Endothelial cell of umbilical vein (primary cell): ENCODE measurements at regions of chr4 and their contacts with region 1.

Region 1: GRCh38 chr4:167210166-167210565 is 24.1 kb downstream of the SPOCK3 start:
- DNase-seq: no peak
- H3K4me3 ChIP-seq: no peak overlapping the region
- H3K27ac ChIP-seq: no peak overlapping the region
- H3K4me1 ChIP-seq: peaks cover 2% of the 10 kb centered on the region
- H3K27me3 ChIP-seq: no peaks in the 10 kb centered on the region
- CTCF ChIP-seq: no peak
- POLR2A ChIP-seq: no peak

Region 2: DNA sequence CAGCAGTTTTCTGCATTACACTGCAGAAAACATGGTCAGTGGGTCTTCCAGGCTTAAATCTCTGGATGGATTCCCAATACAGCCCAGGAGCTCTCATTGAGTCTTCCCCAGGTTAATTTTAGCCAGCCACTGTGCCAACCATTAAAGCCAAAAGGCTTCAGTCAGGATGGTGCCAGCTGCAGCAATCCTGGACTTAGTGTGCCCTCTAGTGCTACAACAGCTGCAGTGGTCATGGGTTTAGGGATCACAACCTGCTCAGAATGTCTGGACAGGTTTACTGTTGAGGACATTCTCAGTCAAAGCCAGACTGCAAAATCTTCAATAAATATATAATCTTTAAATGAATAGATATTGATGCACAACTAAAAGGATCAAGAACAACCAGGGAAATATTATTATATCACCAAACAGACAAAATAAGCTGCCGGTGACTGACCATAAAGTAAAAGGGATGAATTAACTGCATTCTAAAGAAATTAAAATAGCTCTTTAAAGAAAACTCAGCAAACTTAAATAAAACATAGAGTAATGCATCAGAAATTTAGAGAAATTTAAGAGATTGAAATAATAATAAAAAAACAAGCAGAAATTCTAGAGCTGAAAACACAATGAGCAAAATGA is 615.7 kb before region 1 on chr4:
- CTCF ChIA-PET with region 1: no interaction called
- POLR2A ChIA-PET with region 1: no interaction called
- dilution Hi-C with region 1: no loop called
- intact Hi-C with region 1: no loop called
- DNase-seq: no peak
- H3K4me3 ChIP-seq: no peak overlapping the region
- H3K27ac ChIP-seq: no peak overlapping the region
- H3K4me1 ChIP-seq: no peaks in the 10 kb centered on the region
- H3K27me3 ChIP-seq: no peaks in the 10 kb centered on the region
- CTCF ChIP-seq: no peak
- POLR2A ChIP-seq: no peak

Region 3: GRCh38 chr4:167032871-167033270 is 177.3 kb before region 1 on chr4:
- CTCF ChIA-PET with region 1: no interaction called
- POLR2A ChIA-PET with region 1: no interaction called
- dilution Hi-C with region 1: no loop called
- intact Hi-C with region 1: loop called (anchors 5 kb)
- DNase-seq: peak; percentile 69
- H3K4me3 ChIP-seq: no peak overlapping the region
- H3K27ac ChIP-seq: no peak overlapping the region
- H3K4me1 ChIP-seq: peaks cover 24% of the 10 kb centered on the region
- H3K27me3 ChIP-seq: no peaks in the 10 kb centered on the region
- CTCF ChIP-seq: no peak
- POLR2A ChIP-seq: no peak